HepG2 (cell line): ENCODE measurements at regions of chr9 and their contacts with region 1.

Region 1: DNA sequence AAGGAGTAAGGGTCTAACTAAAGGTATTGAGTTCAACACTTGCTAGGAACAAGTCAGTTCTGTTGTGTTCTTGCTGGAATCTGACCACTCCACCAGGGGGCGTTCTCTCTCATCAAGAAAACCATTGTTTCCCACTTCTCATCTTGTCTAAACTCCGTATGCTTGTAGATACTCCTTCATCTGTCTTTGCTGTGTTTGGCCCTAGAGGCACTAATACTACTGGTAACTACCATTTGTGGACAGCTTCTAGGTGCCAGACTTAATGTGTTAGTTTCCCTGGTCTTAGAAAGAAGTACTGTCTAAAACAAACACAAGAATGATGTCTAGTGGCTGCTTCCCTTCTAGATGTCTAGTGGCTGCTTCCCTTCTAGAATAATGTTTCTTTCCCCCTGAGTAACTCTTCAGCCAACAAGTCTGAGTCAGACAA is 18.7 kb upstream of the PTPDC1 start:
- DNase-seq: peak; percentile 65
- ATAC-seq: peak; percentile 72
- H3K4me3 ChIP-seq: no peak overlapping the region
- H3K27ac ChIP-seq: no peak overlapping the region
- H3K4me1 ChIP-seq: no peaks in the 10 kb centered on the region
- H3K27me3 ChIP-seq: no peaks in the 10 kb centered on the region
- CTCF ChIP-seq: peak; percentile 82
- EP300 ChIP-seq: no peak
- POLR2A ChIP-seq: no peak
- RAD21 ChIP-seq: peak; percentile 69

Region 2: DNA sequence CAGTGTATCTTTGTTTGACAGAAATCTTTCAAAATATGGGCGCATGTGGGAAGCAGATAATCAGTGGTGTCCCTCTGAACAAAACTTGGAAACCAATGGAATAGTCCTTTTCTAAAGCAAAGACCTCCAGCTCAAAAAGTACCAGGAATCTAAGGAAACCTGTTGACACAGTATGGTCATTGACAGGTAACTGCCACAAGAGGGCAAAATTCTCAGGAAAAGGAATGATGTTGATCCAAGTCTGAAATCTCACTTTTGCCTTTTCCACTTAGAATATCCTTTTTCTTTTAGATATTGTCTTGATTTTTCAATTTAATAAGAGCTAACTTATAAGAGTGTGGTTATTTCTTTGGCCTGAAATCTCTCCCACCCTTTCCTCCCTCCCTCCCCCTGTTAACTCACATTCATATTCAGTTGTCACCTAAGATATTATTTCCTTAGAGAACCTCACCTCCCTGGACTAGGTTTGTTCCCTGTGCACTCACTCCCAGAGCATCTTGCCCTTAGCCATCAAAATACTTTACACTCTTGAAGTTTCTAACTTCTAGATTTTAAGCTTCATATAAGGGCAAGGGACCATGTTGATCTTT is 51.4 kb before region 1 on chr9:
- CTCF ChIA-PET with region 1: no interaction called
- POLR2A ChIA-PET with region 1: no interaction called
- in situ Hi-C with region 1: no loop called
- intact Hi-C with region 1: loop called (anchors 10 kb)
- DNase-seq: peak; percentile 41
- ATAC-seq: peak; percentile 74
- H3K4me3 ChIP-seq: no peak overlapping the region
- H3K27ac ChIP-seq: no peak overlapping the region
- H3K4me1 ChIP-seq: no peaks in the 10 kb centered on the region
- H3K27me3 ChIP-seq: peaks cover 0 to 6% of the 10 kb centered on the region in 2 experiments; a peak in 1 of 5 replicates
- CTCF ChIP-seq: peak; percentile 68
- EP300 ChIP-seq: no peak
- POLR2A ChIP-seq: no peak
- RAD21 ChIP-seq: no peak; the same call in 1 of the 2 replicates

Region 3: GRCh38 chr9:94084314-94084713 is 18.8 kb after region 1 on chr9 and contains the start of gene PTPDC1:
- CTCF ChIA-PET with region 1: no interaction called
- POLR2A ChIA-PET with region 1: no interaction called
- in situ Hi-C with region 1: no loop called
- intact Hi-C with region 1: no loop called
- DNase-seq: peak; percentile 35
- ATAC-seq: no peak
- H3K4me3 ChIP-seq: no peak within 1 kb of the TSS
- H3K27ac ChIP-seq: peak within 1 kb of the TSS; percentile 13
- H3K4me1 ChIP-seq: peaks cover 19% of the 10 kb centered on the region
- H3K27me3 ChIP-seq: no peaks in the 10 kb centered on the region
- CTCF ChIP-seq: no peak
- EP300 ChIP-seq: no peak
- POLR2A ChIP-seq: no peak
- RAD21 ChIP-seq: no peak
- total RNA-seq, gene PTPDC1: 5.2 and 6.1 TPM in 2 replicates

Region 4: DNA sequence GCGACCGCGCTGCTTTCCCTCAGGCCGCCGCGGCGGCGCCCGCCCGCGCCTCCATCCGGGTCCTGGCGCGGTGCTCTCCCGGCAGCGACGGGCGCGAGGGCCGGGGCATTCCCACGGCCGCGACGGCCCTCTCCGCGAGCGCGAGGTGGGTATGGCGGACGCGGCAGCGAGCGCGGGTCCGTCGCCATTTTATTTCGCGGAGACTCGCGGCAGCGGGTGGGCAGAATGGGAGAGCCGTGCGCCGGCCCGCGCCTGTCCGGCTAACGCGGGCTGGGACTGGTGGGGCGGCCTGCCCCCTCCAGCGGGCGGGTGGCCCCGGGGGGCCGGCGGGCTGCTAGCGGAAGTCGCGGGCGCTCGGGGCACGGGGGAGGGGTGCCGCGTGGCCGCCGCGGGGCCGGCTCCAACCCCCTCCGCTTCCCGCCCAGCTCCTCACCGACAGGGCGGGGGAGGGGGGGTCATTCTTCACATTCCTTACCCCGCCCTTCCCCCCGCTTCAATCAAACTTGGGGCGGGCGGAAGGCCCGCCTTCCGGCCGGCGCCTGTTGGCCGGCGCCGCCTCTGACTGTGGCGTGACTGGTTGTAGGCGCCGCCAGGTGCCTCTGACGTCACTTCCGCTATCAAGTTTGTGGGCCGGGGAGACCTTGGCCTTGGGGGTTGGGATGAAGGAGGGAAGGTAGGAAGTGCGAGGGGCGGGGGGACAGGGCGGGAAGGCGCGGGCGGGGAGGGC is 100.9 kb after region 1 on chr9:
- CTCF ChIA-PET with region 1: no interaction called
- POLR2A ChIA-PET with region 1: interaction called, 3 read pairs
- in situ Hi-C with region 1: no loop called
- intact Hi-C with region 1: loop called (anchors 5 kb)
- DNase-seq: peak; percentile 97
- ATAC-seq: peak; percentile 68
- H3K4me3 ChIP-seq: peak overlapping the region; percentile 82 to 93 (median 83); a peak in 5 of 6 replicates
- H3K27ac ChIP-seq: peak overlapping the region; percentile 99
- H3K4me1 ChIP-seq: peaks cover 55% of the 10 kb centered on the region
- H3K27me3 ChIP-seq: no peaks in the 10 kb centered on the region
- CTCF ChIP-seq: no peak
- EP300 ChIP-seq: peak in 1 of 2 experiments; percentile 61; a peak in 3 of 4 replicates
- POLR2A ChIP-seq: peak; percentile 72 to 82
- RAD21 ChIP-seq: peak; percentile 69

Region 5: DNA sequence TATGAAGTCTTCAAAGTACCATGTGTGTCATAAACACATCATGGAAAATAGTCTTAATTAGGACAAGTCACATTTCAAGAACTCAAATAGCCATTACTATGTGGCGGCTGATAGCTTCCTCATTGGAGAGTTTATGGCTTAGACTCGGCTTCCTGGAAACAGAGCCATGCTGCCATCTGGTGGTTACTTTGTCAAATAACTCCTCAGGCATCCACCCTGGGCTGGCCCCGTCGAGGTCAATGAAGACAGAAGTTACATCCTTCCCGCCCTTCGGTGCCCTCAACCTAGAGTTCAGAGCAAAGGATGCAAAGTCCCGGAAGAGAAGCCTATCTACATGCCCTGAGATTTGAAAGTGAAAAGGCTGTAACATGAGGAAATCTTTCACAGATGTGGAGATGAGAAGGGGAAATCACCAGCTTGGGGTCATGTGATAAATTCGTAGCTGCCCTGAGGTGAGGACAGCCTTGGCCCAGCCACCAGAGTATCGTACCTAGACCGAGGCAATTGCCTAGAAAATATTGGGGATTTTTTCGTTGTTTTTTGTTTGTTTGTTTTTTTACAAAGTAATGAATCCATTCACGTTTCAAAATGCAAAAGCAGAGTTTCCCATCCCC is 148.1 kb after region 1 on chr9:
- CTCF ChIA-PET with region 1: interaction called, 63 read pairs
- POLR2A ChIA-PET with region 1: no interaction called
- in situ Hi-C with region 1: loop called (anchors 5 kb)
- intact Hi-C with region 1: loop called (anchors 1 kb)
- DNase-seq: peak; percentile 68
- ATAC-seq: peak; percentile 96
- H3K4me3 ChIP-seq: no peak overlapping the region
- H3K27ac ChIP-seq: no peak overlapping the region
- H3K4me1 ChIP-seq: 0 out of 2 replicates have a peak, but pooled peaks cover 4% of the 10 kb centered on the region
- H3K27me3 ChIP-seq: peaks cover 0 to 10% of the 10 kb centered on the region in 2 experiments; a peak in 2 of 5 replicates
- CTCF ChIP-seq: peak; percentile 92
- EP300 ChIP-seq: no peak
- POLR2A ChIP-seq: no peak
- RAD21 ChIP-seq: peak; percentile 92